Endothelial cell of umbilical vein (primary cell): ENCODE measurements at regions of chr19 and their contacts with region 1.

Region 1: DNA sequence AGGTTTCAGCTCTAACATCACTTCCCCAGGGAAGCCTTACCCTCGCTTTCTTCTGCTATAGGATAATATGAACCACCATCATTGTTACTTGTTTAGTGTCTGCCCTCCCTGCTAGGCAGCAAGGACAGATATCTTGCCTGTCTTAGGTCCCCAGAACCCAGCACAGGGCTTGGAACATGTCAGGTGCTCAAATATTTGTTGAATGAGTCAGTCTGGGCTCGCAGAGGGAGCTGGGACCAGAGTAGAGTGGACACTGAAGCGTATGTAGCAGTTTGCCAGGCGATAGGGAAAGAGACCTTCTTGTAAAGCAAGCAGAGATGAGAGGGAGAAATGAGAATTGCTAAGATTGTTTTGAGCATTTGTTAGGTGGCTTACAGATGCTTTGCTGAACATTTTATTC is 11.7 kb downstream of the BCKDHA start:
- DNase-seq: peak; percentile 15
- H3K4me3 ChIP-seq: no peak overlapping the region
- H3K27ac ChIP-seq: no peak overlapping the region
- H3K4me1 ChIP-seq: peaks cover 12% of the 10 kb centered on the region
- H3K27me3 ChIP-seq: no peaks in the 10 kb centered on the region
- CTCF ChIP-seq: no peak
- POLR2A ChIP-seq: no peak

Region 2: DNA sequence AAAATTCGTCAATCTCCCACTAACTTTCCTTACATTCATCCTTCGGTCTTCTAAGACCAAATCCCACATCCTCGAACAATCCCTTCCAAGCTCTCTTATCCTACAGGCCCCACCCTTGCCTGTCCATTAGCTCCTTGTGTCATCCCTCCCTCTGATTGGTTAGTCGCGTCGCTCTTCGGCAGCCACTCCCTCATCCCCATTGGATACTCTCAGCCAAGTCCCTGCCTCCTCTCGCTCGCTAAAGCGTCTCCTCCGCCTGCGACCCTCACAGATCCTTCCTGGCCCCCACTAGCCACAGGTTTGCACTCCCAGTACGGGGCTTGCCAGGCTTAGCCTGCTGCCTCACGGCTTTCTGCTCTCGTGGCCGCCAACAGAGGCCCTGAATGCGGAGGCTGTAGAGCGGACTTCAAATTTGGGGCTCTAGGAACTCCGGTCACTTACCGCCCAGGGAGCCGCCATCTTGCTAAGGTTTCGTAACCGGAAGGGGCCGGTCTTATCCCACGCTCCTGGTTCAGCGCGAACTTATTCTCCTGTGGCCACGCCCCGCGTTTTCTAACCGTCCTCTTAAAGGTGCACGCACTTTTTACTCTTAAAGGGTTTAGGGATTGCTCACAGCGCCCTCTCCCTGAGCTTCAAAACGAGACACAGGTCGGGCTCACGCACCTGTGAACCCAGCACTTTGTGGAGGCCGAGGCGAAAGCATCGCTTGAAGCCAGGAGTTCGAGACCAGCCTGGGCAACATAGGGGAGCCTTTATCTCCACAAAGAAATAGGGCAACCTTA is 30.3 kb after region 1 on chr19 and contains the start of gene DMAC2:
- CTCF ChIA-PET with region 1: interaction called, 15 read pairs
- POLR2A ChIA-PET with region 1: no interaction called
- dilution Hi-C with region 1: no loop called
- intact Hi-C with region 1: no loop called
- DNase-seq: peak; percentile 98
- H3K4me3 ChIP-seq: peak within 1 kb of the TSS; percentile 66 to 87 (median 76)
- H3K27ac ChIP-seq: peak within 1 kb of the TSS; percentile 89
- H3K4me1 ChIP-seq: peaks cover 6% of the 10 kb centered on the region
- H3K27me3 ChIP-seq: peaks cover 0 to 2% of the 10 kb centered on the region in 2 experiments
- CTCF ChIP-seq: peak; percentile 37 to 52
- POLR2A ChIP-seq: peak; percentile 79
- total RNA-seq, gene DMAC2: 63.2 and 65.4 TPM in 2 replicates

Region 3: DNA sequence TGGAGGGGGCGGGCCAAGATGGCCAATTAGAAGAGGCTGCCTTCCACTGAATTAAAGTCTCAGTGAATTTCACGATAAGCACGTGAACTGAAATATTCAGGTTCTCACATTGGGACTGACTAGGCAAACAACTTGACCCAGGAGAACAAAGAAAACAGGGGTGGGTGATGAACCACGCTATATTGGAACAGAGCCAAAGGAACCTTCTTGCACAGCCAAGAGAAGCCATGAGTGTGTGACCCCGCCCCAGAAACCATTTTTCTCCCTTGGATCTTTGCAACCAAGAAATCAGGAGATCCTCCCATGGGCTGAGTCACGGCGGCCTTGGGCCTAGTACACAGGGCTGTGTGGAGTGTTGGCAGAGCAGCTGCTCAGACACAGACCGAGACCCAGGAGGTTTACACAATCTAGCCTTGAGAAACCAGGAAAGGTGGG is 70.5 kb after region 1 on chr19:
- CTCF ChIA-PET with region 1: no interaction called
- POLR2A ChIA-PET with region 1: no interaction called
- dilution Hi-C with region 1: no loop called
- intact Hi-C with region 1: no loop called
- DNase-seq: peak; percentile 98
- H3K4me3 ChIP-seq: peak overlapping the region in 2 of 3 experiments; percentile 56 to 98
- H3K27ac ChIP-seq: peak overlapping the region; percentile 97
- H3K4me1 ChIP-seq: peaks cover 37% of the 10 kb centered on the region
- H3K27me3 ChIP-seq: peaks cover under 1 to 3% of the 10 kb centered on the region in 2 experiments
- CTCF ChIP-seq: no peak
- POLR2A ChIP-seq: peak; percentile 96